ENCODE measurements at regions of chr12 and their contacts with region 1.

Region 1: GRCh38 chr12:31029916-31030562 is 43.6 kb upstream of the DDX11 start:
- DNase-seq: peak in 1 of 2 experiments; percentile 64
- H3K4me3 ChIP-seq: no peak overlapping the region
- H3K27ac ChIP-seq: no peak overlapping the region
- H3K4me1 ChIP-seq: peaks cover 59% of the 10 kb centered on the region
- H3K27me3 ChIP-seq: no peaks in the 10 kb centered on the region
- CTCF ChIP-seq: no peak

Region 2: GRCh38 chr12:30243426-30243825 is 786.6 kb before region 1 on chr12:
- CTCF ChIA-PET with region 1: no interaction called
- POLR2A ChIA-PET with region 1: interaction called, 10 read pairs
- intact Hi-C with region 1: no loop called
- DNase-seq: no peak
- H3K4me3 ChIP-seq: no peak overlapping the region
- H3K27ac ChIP-seq: no peak overlapping the region
- H3K4me1 ChIP-seq: no peaks in the 10 kb centered on the region
- H3K27me3 ChIP-seq: no peaks in the 10 kb centered on the region
- CTCF ChIP-seq: no peak

Region 3: DNA sequence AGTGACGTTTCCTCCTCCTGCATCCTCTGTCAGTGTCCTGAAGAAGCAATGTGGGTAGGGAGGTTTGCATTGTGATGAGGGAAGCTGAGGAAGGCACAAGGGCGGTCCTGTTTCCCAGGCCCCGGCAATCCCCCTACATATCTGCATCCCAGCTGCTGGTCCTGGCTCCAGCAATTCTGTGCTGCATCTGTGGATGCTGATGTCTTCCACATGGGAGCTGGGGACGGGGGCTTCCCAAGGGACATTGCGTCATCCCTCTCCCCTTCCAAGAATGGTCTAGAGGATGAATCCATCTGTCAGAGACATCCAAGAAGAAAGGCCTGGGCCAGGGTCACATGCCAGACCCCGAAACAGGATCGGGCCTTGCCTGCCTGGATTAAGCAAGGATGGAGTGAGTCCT is 51.4 kb before region 1 on chr12:
- CTCF ChIA-PET with region 1: no interaction called
- POLR2A ChIA-PET with region 1: interaction called, 19 read pairs
- intact Hi-C with region 1: no loop called
- DNase-seq: no peak
- H3K4me3 ChIP-seq: no peak overlapping the region
- H3K27ac ChIP-seq: no peak overlapping the region
- H3K4me1 ChIP-seq: peaks cover 14% of the 10 kb centered on the region; the same call in 1 of the 2 replicates
- H3K27me3 ChIP-seq: no peaks in the 10 kb centered on the region
- CTCF ChIP-seq: no peak

Measured in PC-9 (cell line).